Activated CD4-positive, alpha-beta T cell treated with anti-CD3 and anti-CD28 coated beads, Interleukin-2, amount 10 ng/mL, durations not matched to agents 7 days and 5 days (primary cell): ENCODE measurements at regions of chr16 and their contacts with region 1.

Region 1: DNA sequence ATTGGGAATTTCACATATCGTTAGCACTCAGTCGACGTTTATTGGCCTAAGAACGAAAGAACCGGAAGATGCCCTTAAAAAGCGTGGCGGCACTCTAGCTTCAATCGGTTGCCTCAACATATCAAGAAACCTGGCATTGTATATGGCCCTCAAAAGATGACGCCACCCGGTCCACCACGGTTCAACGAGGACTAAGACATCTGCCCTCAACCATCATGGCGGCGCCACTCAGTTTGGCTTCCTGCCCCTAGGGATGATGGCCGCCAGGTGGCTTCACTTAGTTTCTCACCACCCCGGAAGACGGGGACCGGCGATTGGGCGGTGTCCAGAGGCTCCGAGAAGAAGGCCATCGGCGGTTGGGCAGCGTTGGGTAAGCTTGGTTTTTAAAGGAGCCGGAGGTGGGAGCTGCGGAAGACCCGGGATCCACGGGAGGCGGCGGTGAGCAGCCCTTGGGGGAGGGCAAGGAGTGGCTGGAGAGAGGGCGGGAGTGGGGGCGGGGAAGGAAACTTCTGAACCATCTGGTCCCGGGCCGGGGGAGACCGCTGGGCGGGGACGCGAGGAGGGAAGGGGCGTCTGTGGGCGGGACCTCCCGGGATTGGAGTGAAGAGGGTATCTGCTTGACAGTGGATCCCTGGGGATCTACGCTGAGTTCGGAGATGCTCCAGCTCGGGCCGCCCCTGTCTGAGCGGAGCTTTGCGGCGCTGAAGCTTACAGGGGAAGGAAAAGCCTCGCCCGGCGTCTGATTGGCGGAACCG is at the start of gene PRR14:
- DNase-seq: peak; percentile 100
- H3K4me3 Mint-ChIP-seq: peak within 1 kb of the TSS; percentile 100
- H3K27ac Mint-ChIP-seq: peak within 1 kb of the TSS; percentile 99
- H3K4me1 Mint-ChIP-seq: peaks cover 41% of the 10 kb centered on the region
- H3K27me3 Mint-ChIP-seq: peaks cover 2% of the 10 kb centered on the region
- total RNA-seq, gene PRR14: 78.6 to 80.1 TPM

Region 2: GRCh38 chr16:30482366-30482765 is 168.2 kb before region 1 on chr16:
- CTCF ChIA-PET with region 1: no interaction called
- POLR2A ChIA-PET with region 1: no interaction called
- DNase-seq: no peak
- H3K4me3 Mint-ChIP-seq: no peak overlapping the region
- H3K27ac Mint-ChIP-seq: peak overlapping the region; percentile 74
- H3K4me1 Mint-ChIP-seq: peaks cover 65% of the 10 kb centered on the region
- H3K27me3 Mint-ChIP-seq: no peaks in the 10 kb centered on the region

Region 3: DNA sequence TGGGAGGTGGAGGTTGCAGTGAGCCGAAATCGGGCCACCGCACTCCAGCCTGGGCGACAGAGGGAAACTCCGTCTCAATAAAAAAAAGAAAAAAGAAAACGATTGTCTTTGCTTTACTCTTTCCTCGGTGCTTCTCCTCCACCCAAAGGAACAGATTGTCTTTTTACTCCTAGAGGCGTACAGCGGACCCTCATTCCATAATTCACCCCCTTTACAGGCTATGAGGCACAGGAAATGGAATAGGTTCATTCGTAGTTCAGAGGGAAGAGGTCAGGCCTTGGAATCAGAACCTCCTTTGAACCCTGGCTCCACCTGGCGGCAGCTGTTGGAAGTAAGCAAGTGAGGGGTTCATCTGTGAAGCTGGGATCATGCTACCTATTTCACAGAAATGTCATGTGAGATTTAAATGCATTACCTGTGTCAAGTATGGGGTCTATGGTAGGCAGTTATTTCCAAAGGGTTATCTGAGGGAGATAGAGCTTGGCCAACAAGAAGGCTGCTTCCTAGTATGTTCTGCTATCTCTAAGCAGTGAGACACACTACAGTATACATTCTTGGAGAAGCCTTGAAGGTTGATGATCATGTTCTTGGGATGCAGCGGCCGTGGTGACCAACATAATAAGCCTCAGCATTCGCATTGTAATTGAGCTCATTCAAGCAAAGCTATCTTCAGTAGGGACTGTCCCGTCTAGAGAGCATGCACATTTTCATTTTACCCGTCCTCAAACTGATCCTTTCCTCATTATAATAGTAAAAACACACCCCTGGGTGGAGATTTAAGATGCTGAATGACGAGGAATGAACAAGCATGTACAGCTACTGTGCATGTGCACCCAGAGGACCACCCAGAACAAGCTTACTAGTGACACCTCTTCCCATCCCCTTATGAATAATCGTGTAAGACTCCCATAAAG is 21.7 kb before region 1 on chr16:
- CTCF ChIA-PET with region 1: interaction called, 10 read pairs
- POLR2A ChIA-PET with region 1: no interaction called
- DNase-seq: peak; percentile 91
- H3K4me3 Mint-ChIP-seq: no peak overlapping the region
- H3K27ac Mint-ChIP-seq: no peak overlapping the region
- H3K4me1 Mint-ChIP-seq: peaks cover 11% of the 10 kb centered on the region
- H3K27me3 Mint-ChIP-seq: no peaks in the 10 kb centered on the region

Region 4: DNA sequence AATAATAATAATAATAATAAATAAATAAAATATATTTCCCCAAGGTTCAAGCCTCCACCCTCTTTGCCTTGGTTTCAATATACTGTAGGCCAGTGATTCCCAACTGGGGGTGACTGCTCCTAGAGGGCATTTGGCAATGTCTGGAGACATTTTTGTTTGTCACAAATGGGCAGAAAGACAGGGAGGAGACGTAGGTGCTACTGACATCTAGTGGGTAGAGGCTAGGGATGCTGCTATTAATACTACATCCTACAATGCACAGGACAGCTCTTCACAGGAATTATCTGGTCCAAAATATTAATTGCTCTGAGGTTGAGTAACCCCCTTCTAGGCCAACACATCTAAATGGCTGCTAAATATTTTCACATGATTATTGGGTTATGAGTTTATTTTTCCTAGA is 12.6 kb before region 1 on chr16:
- CTCF ChIA-PET with region 1: interaction called, 19 read pairs
- POLR2A ChIA-PET with region 1: interaction called, 3 read pairs
- DNase-seq: peak; percentile 48
- H3K4me3 Mint-ChIP-seq: no peak overlapping the region
- H3K27ac Mint-ChIP-seq: no peak overlapping the region
- H3K4me1 Mint-ChIP-seq: peaks cover 16% of the 10 kb centered on the region
- H3K27me3 Mint-ChIP-seq: peaks cover 2% of the 10 kb centered on the region